ENCODE measurements at regions of chr1 and their contacts with region 1.

Region 1: DNA sequence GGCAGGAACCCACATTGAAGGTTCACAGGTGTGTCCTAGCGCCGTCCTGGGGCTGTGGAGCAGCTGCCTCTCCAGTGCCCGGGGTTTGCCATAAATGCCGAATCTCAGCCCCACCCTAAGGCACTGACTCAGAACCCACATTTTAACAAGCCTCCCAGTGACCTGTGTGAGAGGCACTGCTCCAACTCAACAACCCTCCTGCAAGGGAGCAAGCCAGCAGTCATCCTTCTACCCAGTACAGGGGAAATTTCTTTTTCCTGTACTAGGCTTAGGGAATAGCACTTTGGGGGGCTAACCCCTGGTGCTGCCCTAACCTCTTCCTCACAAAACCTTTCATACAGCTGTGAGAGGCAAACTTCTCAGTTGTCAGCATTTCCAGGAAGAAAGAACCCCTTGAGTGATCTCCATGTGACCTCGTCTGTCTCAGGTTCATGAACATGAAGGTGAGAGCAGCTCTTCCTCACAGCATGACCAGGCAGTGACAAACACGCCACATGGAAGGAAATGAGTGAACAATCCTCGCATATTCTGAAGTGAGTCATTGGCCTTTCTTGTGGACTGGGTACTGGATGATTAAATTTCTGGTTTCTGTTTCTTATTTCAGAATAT is 11.4 kb upstream of the BCAR3 start:
- DNase-seq: peak; percentile 62
- CTCF ChIP-seq: no peak

Region 2: GRCh38 chr1:93447516-93448291 is 245.4 kb before region 1 on chr1 and contains the start of gene FNBP1L:
- CTCF ChIA-PET with region 1: no interaction called
- POLR2A ChIA-PET with region 1: no interaction called
- DNase-seq: peak; percentile 62
- CTCF ChIP-seq: no peak

Region 3: DNA sequence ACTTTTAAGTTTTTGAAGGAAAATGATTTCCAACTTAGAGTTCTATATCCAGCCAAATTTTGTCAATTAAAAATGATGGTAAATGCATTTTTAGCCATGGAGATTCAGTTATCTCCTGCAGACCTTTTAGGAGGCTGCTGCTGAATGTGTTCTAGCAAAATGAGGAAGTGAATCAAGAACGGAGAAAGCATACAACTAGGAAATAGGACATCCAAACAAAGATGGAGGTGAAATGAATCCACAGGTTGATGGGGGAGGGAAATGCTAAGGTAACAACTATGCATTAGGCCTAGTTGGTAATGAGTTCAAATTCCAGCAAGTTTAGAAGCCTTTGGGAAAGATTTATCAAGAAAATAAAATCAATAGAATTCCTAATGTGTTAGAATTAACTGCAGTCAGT is 164.7 kb before region 1 on chr1:
- CTCF ChIA-PET with region 1: no interaction called
- POLR2A ChIA-PET with region 1: no interaction called
- DNase-seq: no peak
- CTCF ChIP-seq: no peak

Region 4: DNA sequence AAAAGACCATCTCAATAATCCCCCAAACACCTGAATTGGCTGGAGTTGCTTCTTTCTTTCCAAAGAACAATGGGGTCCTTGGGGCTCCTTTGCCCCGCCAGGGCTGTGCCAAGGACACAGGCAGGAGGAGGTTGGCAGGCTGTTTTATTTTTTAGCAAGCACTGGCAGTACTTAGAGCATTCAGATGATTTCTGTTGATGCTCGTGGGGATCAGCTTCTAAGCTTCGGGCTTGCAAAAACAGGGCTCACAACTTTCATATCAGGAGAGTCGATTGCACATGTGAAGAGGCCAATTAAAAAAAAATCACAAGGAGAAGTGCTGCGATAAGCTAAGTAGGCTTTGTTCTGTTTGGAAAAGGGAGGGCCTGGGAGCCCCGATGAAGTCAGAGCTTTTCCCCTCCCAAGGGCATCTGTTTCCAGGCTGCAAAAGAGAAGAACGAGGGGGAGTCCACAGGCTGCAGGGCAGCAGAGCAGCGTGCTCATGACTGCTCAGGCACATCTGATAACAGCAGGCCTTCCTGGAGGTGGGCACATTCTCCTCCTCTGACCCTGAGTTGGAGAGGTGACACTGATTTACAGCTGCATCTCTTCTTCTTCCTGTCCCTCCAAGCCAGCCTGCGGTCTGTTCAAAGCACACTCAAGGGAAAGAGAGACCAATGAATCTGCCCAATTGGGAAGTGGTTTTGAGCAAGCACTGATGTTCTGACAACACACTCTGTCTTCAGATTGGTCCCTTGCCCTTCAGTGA is 15.8 kb after region 1 on chr1:
- CTCF ChIA-PET with region 1: interaction called, 11 read pairs
- POLR2A ChIA-PET with region 1: interaction called, 5 read pairs
- DNase-seq: no peak
- CTCF ChIP-seq: no peak

Region 5: GRCh38 chr1:93888896-93889295 is 195.8 kb after region 1 on chr1:
- CTCF ChIA-PET with region 1: no interaction called
- POLR2A ChIA-PET with region 1: no interaction called
- DNase-seq: no peak
- CTCF ChIP-seq: no peak

Region 6: DNA sequence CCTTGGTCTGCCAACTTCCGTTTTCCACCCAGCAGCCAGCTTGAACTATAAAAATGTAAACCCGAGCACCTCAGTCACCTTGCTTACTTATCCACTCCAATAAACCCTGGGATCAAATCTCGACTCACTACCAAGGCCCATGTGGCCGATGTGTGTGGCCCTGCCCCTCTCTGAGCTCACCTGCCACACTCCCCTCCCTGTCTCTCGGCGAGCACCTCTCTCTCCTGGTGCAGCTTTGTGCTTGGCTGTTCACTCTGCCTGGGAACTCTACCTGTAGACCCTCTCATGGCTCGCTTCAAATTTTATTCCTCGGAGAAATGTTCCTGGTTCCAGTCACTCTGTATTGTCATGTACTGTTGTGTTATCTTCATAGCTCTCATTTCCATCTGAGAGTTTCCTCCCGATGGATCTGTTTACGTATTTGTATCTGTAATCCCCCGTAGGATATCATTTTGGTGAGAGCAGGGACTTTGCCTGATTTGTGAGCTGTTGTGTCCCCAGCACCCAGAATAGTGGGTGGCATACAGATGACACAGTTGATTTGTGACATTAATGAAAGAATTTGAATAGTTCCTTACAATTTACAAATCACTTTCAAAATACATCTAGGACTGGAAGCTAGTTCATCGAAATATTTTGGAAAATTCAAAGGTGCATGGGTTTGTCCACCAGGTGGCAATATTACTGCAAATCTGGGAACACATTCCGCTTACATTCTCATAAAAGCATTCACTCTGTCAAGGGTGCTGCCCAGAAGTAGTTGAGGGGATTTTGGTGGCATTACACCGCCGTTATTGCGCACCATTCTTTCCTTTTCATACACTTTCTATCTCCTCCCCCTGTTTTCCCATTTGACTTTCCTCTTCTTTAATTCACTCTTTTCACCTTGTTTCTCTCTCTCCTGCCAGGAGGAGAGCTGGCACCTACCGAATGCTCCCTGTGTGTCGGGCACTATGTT is 332.6 kb after region 1 on chr1:
- CTCF ChIA-PET with region 1: no interaction called
- POLR2A ChIA-PET with region 1: no interaction called
- DNase-seq: peak; percentile 45
- CTCF ChIP-seq: peak; percentile 52

Measured in GM10248 (cell line).